H1 (cell line): ENCODE measurements at regions of chr11 and their contacts with region 1.

Region 1: GRCh38 chr11:44364596-44364995 is 54.7 kb upstream of the ALX4 start:
- DNase-seq: no peak
- H3K4me3 ChIP-seq: no peak overlapping the region
- H3K27ac ChIP-seq: no peak overlapping the region
- H3K4me1 ChIP-seq: peaks cover 0 to 4% (median 3%) of the 10 kb centered on the region in 4 experiments; a peak in 4 of 7 replicates
- H3K27me3 ChIP-seq: no peaks in the 10 kb centered on the region; a peak in 1 of 7 replicates
- CTCF ChIP-seq: no peak
- EP300 ChIP-seq: no peak
- POLR2A ChIP-seq: no peak
- RAD21 ChIP-seq: no peak

Region 2: DNA sequence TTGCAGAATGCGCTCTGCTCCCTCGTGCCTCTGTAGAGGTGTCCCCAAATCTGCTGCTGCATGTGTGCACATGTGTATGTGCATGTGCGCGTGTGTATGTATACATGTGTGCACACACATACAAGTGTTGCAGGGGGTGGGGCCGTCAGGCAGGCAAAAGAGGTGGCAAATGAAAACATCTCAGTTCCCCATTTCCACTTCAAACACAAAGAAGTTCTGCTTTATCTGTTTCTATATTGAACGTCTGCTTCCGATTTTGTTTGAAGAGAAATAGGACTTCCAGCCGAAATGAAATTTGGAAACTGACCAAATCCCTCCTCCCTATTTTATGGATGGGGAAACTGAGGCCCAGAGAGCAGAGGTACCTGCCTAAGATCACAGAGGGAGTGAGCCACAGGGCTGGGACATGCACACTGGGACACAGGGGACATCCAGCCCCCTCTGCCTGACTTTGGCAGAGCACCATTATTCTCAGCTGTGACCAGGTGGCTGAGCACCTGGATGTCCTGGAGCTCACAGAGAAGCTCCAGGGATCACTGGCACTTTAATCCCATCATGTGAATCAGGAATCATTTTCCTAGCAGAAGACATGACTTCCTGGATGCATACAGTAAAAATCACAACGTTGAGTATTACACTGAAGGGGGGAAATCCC is 13.5 kb before region 1 on chr11:
- CTCF ChIA-PET with region 1: interaction called, 12 read pairs
- POLR2A ChIA-PET with region 1: no interaction called
- DNase-seq: no peak
- H3K4me3 ChIP-seq: no peak overlapping the region
- H3K27ac ChIP-seq: no peak overlapping the region
- H3K4me1 ChIP-seq: no peaks in the 10 kb centered on the region
- H3K27me3 ChIP-seq: peaks cover 0 to 2% (median 0%) of the 10 kb centered on the region in 4 experiments; a peak in 2 of 7 replicates
- CTCF ChIP-seq: no peak
- EP300 ChIP-seq: no peak
- POLR2A ChIP-seq: no peak
- RAD21 ChIP-seq: no peak

Region 3: GRCh38 chr11:44387825-44388224 is 23.2 kb after region 1 on chr11:
- CTCF ChIA-PET with region 1: no interaction called
- POLR2A ChIA-PET with region 1: no interaction called
- DNase-seq: no peak
- H3K4me3 ChIP-seq: no peak overlapping the region
- H3K27ac ChIP-seq: no peak overlapping the region
- H3K4me1 ChIP-seq: peaks cover 0 to 3% (median 1%) of the 10 kb centered on the region in 4 experiments; a peak in 4 of 7 replicates
- H3K27me3 ChIP-seq: no peaks in the 10 kb centered on the region; a peak in 1 of 7 replicates
- CTCF ChIP-seq: no peak
- EP300 ChIP-seq: no peak
- POLR2A ChIP-seq: no peak
- RAD21 ChIP-seq: no peak